ENCODE measurements at regions of chr2 and their contacts with region 1.

Region 1: GRCh38 chr2:60530660-60531281 is 22.7 kb downstream of the BCL11A start:
- DNase-seq: peak; percentile 85
- H3K4me3 ChIP-seq: peak overlapping the region in 3 of 4 donors; percentile 17 to 25 (median 18)
- H3K27ac ChIP-seq: peak overlapping the region in 3 of 4 donors; percentile 69 to 75 (median 70)
- H3K4me1 ChIP-seq: peaks cover 0 to 82% (median 72%) of the 10 kb centered on the region in 4 donors
- H3K27me3 ChIP-seq: no peaks in the 10 kb centered on the region
- CTCF ChIP-seq: no peak
- EP300 ChIP-seq: no peak
- POLR2A ChIP-seq: no peak

Region 2: DNA sequence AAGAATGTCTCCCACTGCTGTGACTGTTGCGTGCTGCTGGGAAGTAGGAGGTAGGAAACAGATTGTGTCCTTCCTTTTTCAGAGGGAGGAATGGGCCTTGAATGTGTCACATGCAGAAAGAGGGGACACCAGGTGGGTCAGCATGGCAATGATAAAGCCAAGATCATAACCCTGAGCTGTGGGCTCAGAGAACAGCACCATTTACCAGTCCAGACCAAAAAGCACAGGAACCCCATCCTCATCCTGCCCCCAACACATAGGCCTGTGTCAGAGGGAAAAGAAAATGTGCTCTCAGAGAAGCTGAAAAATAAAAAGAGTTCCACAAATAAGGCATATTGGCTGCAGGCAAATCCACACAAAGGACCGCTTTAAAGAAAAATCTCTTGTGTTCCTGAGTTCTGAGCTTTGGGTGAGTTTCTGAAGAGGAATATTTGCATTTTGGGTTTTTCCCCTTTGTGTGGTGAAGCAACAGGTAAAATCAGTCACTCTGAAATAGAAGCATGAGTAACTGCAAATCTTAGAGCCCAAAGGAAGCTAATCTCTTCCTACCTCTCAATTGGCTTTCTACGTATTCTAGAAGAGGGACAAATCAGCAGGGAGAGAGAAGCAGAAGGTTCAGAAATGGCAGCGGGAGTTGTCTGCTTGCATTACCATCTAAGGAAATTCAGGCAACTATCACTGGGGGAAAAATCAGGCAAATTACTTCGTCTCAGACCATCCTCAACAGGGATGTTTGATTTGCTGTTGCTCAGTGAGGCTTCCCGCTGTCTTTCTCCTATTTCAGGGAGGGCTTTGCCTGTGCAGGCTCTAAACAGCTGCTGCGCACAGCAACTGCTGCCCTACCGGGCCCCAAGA is 84.1 kb before region 1 on chr2:
- intact Hi-C with region 1: no loop called
- DNase-seq: no peak
- H3K4me3 ChIP-seq: no peak overlapping the region
- H3K27ac ChIP-seq: no peak overlapping the region
- H3K4me1 ChIP-seq: no peaks in the 10 kb centered on the region
- H3K27me3 ChIP-seq: no peaks in the 10 kb centered on the region
- CTCF ChIP-seq: no peak
- EP300 ChIP-seq: no peak
- POLR2A ChIP-seq: no peak

Region 3: DNA sequence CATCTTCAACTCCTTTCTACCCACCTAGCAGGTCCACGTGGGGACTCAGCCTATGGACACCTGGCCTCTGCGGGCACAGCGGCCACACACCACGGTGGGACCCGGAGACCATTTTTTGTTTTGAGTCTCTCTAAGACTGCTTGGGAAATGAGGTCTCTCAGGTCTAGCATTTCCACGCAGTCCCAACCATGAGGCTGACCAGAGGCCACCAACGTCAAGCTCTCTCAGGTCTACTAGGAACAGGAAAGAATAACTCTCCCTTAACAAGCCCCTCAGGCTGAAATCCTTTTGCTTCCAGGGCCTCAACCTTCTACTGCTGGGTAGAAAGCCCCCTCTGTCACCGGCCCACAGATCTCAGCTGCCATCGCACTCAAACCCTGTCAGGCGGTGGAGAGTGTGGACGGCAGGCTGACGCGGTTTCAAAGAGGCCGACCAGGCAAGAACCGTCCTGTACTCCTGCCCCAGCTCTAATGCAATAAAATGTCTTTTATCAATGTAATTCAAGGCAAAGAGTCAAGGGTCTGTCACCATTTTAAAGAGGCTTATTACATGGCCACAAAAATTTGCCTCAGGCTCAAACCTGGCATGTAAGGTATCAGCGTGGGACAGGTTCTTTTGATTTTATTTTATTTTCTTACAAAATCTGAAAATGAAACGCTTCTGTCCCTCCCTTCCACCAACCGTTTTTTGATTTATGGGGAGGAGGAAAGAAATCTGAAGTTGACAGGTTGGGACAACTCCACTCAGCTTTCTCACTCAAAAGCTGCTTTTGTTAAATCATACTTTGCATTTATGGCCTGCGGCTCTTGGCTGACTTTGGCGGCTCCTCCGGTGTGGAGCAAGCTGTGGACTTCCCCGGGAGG is 51.3 kb before region 1 on chr2:
- intact Hi-C with region 1: loop called (anchors 5 kb)
- DNase-seq: no peak
- H3K4me3 ChIP-seq: no peak overlapping the region
- H3K27ac ChIP-seq: peak overlapping the region in 3 of 4 donors; percentile 67 to 81 (median 80)
- H3K4me1 ChIP-seq: peaks cover 0 to 60% (median 44%) of the 10 kb centered on the region in 4 donors
- H3K27me3 ChIP-seq: no peaks in the 10 kb centered on the region
- CTCF ChIP-seq: no peak
- EP300 ChIP-seq: no peak
- POLR2A ChIP-seq: no peak